ENCODE measurements at regions of chr1 and their contacts with region 1.

Region 1: DNA sequence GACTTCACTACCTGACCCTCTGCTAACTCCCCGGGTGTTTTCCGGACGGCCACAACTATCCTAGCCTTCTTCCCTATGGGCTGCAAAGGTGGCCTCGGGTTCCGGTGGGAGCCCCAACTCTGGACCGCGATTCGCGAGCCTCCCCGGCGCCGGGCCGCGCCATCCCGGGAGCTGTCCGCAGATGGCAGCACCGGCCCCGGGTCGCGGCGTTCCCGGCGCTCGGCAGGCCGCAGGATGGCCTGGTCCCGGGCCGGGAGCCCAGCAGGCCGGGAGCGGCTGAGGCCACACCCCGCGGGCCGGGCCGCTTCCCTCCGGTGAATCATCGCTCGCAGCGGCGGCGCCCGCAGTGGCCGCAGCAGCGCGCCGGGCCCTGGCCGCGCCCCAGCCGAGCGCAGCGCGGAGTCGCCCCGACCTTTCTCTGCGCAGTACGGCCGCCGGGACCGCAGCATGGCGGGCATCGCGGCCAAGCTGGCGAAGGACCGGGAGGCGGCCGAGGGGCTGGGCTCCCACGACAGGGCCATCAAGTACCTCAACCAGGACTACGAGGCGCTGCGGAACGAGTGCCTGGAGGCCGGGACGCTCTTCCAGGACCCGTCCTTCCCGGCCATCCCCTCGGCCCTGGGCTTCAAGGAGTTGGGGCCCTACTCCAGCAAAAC is at the start of gene CAPN2:
- DNase-seq: peak; percentile 87
- H3K4me3 ChIP-seq: peak within 1 kb of the TSS; percentile 70 to 88 (median 78)
- H3K27ac ChIP-seq: peak within 1 kb of the TSS; percentile 95 to 98 (median 96)
- H3K4me1 ChIP-seq: peaks cover 41 to 70% (median 58%) of the 10 kb centered on the region in 4 donors
- H3K27me3 ChIP-seq: no peaks in the 10 kb centered on the region
- CTCF ChIP-seq: peak; percentile 59 to 86 (median 67)
- EP300 ChIP-seq: no peak
- POLR2A ChIP-seq: peak; percentile 79
- total RNA-seq, gene CAPN2: 193 to 505 (median 387) TPM

Region 2: GRCh38 chr1:223538981-223539380 is 173.3 kb before region 1 on chr1:
- in situ Hi-C with region 1: no loop called
- intact Hi-C with region 1: no loop called
- DNase-seq: no peak
- H3K4me3 ChIP-seq: no peak overlapping the region
- H3K27ac ChIP-seq: no peak overlapping the region
- H3K4me1 ChIP-seq: no peaks in the 10 kb centered on the region
- H3K27me3 ChIP-seq: no peaks in the 10 kb centered on the region
- CTCF ChIP-seq: no peak
- EP300 ChIP-seq: no peak
- POLR2A ChIP-seq: no peak

Region 3: GRCh38 chr1:223748773-223749733 is 36.7 kb after region 1 on chr1:
- in situ Hi-C with region 1: loop called in 2 of 4 experiments (anchors 5 to 10 kb)
- intact Hi-C with region 1: loop called (anchors 5 kb)
- DNase-seq: peak; percentile 71
- H3K4me3 ChIP-seq: peak overlapping the region; percentile 27 to 50 (median 32)
- H3K27ac ChIP-seq: peak overlapping the region; percentile 67 to 87 (median 83)
- H3K4me1 ChIP-seq: peaks cover 7 to 25% (median 15%) of the 10 kb centered on the region in 4 donors
- H3K27me3 ChIP-seq: no peaks in the 10 kb centered on the region
- CTCF ChIP-seq: peak; percentile 94 to 98 (median 97)
- EP300 ChIP-seq: no peak
- POLR2A ChIP-seq: no peak

Region 4: GRCh38 chr1:223755992-223756775 is 43.9 kb after region 1 on chr1:
- in situ Hi-C with region 1: loop called in 2 of 4 experiments (anchors 5 to 10 kb)
- intact Hi-C with region 1: no loop called
- DNase-seq: no peak
- H3K4me3 ChIP-seq: no peak overlapping the region
- H3K27ac ChIP-seq: no peak overlapping the region
- H3K4me1 ChIP-seq: no peaks in the 10 kb centered on the region
- H3K27me3 ChIP-seq: no peaks in the 10 kb centered on the region
- CTCF ChIP-seq: no peak
- EP300 ChIP-seq: no peak
- POLR2A ChIP-seq: no peak

Measured in transverse colon (tissue), 4 donors.